Lower lobe of right lung (tissue), 2 donors: ENCODE measurements at regions of chr2 and their contacts with region 1.

Region 1: DNA sequence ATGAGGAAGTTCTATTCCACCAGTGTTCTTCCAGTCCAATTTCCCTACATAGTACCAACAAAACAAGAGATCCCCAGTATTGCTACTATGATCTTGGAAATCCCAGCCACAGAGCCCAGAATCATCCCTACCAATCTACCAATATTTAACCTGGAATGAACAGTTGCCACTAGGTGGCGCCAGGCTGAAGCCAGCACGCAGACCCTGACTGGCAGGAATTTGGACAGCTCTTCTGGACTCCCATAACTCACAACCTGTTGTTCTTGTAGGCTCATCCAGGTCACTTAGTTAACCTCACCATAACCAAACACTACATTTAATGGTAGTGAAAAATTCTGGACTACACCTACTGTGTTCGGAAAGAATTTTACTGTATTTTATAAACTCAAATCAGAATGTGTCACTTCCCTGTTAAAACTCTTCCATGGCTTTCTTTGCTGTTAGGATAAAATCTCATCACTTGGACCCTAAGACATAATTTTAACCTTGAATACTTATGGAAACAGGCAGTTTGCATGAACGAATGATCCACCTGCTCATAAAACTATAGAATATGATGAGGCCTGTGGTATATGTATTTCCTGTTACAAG is 59.8 kb upstream of the SLC38A11 start:
- DNase-seq: peak; percentile 56
- ATAC-seq: peak; percentile 83 to 86
- H3K4me3 ChIP-seq: no peak overlapping the region
- H3K27ac ChIP-seq: no peak overlapping the region
- H3K4me1 ChIP-seq: peaks cover 3% of the 10 kb centered on the region
- H3K27me3 ChIP-seq: no peaks in the 10 kb centered on the region
- CTCF ChIP-seq: peak; percentile 87

Region 2: DNA sequence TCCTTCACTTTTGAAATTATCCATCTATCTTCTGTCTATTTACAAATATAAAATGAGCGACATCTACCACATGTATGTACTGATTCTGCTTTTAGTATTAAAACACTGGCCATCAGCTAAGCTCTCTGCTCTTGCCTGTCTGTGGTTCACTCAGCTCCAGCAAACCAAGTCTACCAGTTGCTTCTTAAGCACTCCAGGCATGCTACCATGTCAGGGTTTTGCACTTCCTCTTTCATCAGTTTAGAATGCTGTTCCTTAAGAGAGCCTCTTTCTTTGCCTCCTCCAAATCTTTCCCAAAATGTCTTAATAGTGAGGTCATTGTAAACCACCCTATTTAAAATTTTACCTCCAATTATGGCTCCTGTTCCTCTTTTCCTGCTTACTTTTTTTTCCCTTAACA is 129.2 kb after region 1 on chr2:
- intact Hi-C with region 1: no loop called
- DNase-seq: no peak
- ATAC-seq: no peak
- H3K4me3 ChIP-seq: no peak overlapping the region
- H3K27ac ChIP-seq: no peak overlapping the region
- H3K4me1 ChIP-seq: no peaks in the 10 kb centered on the region
- H3K27me3 ChIP-seq: no peaks in the 10 kb centered on the region
- CTCF ChIP-seq: no peak

Region 3: GRCh38 chr2:165155152-165155551 is 140.0 kb after region 1 on chr2:
- intact Hi-C with region 1: no loop called
- DNase-seq: no peak
- ATAC-seq: no peak
- H3K4me3 ChIP-seq: no peak overlapping the region
- H3K27ac ChIP-seq: no peak overlapping the region
- H3K4me1 ChIP-seq: no peaks in the 10 kb centered on the region
- H3K27me3 ChIP-seq: no peaks in the 10 kb centered on the region
- CTCF ChIP-seq: no peak

Region 4: GRCh38 chr2:165203689-165204559 is 188.8 kb after region 1 on chr2 and contains the start of gene SCN3A:
- intact Hi-C with region 1: loop called (anchors 10 kb)
- DNase-seq: no peak
- ATAC-seq: peak in 1 of 2 donors; percentile 42
- H3K4me3 ChIP-seq: no peak within 1 kb of the TSS
- H3K27ac ChIP-seq: no peak within 1 kb of the TSS
- H3K4me1 ChIP-seq: no peaks in the 10 kb centered on the region
- H3K27me3 ChIP-seq: no peaks in the 10 kb centered on the region
- CTCF ChIP-seq: peak; percentile 63
- total RNA-seq, gene SCN3A: 1.4 TPM